A549 (cell line): ENCODE measurements at regions of chr15 and their contacts with region 1.

Region 1: GRCh38 chr15:33242669-33243191 is 48.2 kb upstream of the FMN1 start:
- DNase-seq: peak in 1 of 2 experiments; percentile 48
- ATAC-seq: peak in 1 of 2 experiments; percentile 42; a peak in 2 of 6 replicates
- H3K4me3 ChIP-seq: no peak overlapping the region
- H3K27ac ChIP-seq: peak overlapping the region; percentile 39 to 65; a peak in 5 of 6 replicates
- H3K4me1 ChIP-seq: peaks cover 39% of the 10 kb centered on the region
- CTCF ChIP-seq: peak; percentile 41
- EP300 ChIP-seq: no peak
- POLR2A ChIP-seq: no peak
- RAD21 ChIP-seq: peak; percentile 48 to 50; a peak in 3 of 5 replicates

Region 2: DNA sequence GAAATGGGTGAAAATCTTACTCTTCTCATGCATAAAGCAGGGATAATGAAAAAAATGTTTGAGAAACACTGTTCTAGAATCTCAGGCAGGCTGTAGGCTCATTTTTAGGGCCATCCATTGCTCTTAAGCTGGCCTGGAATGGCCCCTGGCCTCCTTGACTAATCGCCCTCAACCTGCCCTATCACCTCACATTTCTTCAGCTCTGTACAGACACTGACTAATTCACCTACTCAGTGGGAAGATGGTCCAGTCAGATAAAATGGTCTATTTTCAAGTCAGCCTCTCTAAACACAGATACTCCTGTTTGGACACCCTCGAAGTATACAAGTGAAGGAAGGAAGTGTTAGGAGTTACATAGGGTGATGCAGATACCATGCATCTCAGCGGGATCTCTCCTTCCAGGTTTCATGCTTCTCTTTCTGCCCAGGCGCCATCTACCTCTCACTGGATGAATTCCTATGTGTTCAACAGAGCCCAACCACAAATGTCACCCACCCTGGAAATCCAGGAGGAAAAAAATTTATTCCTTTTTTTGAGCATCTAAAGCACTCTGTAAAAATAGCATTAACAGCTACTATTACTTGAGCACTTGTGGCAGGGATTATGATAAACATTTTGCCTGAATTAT is 60.3 kb before region 1 on chr15:
- CTCF ChIA-PET with region 1: no interaction called
- POLR2A ChIA-PET with region 1: no interaction called
- DNase-seq: no peak
- ATAC-seq: peak; percentile 53 to 54; a peak in 2 of 6 replicates
- H3K4me3 ChIP-seq: no peak overlapping the region
- H3K27ac ChIP-seq: no peak overlapping the region
- H3K4me1 ChIP-seq: no peaks in the 10 kb centered on the region
- CTCF ChIP-seq: no peak
- EP300 ChIP-seq: no peak
- POLR2A ChIP-seq: no peak
- RAD21 ChIP-seq: no peak

Region 3: GRCh38 chr15:33226559-33227181 is 16.1 kb before region 1 on chr15:
- CTCF ChIA-PET with region 1: interaction called, 11 read pairs
- POLR2A ChIA-PET with region 1: no interaction called
- DNase-seq: peak; percentile 85 to 86
- ATAC-seq: peak; percentile 88 to 97
- H3K4me3 ChIP-seq: no peak overlapping the region
- H3K27ac ChIP-seq: no peak overlapping the region
- H3K4me1 ChIP-seq: no peaks in the 10 kb centered on the region
- CTCF ChIP-seq: peak; percentile 57
- EP300 ChIP-seq: no peak
- POLR2A ChIP-seq: no peak
- RAD21 ChIP-seq: peak; percentile 37 to 39; a peak in 4 of 5 replicates

Region 4: GRCh38 chr15:33256874-33257273 is 14.1 kb after region 1 on chr15:
- CTCF ChIA-PET with region 1: interaction called, 15 read pairs
- POLR2A ChIA-PET with region 1: no interaction called
- DNase-seq: no peak
- ATAC-seq: no peak
- H3K4me3 ChIP-seq: no peak overlapping the region
- H3K27ac ChIP-seq: no peak overlapping the region
- H3K4me1 ChIP-seq: no peaks in the 10 kb centered on the region
- CTCF ChIP-seq: no peak
- EP300 ChIP-seq: no peak
- POLR2A ChIP-seq: no peak
- RAD21 ChIP-seq: no peak

Region 5: DNA sequence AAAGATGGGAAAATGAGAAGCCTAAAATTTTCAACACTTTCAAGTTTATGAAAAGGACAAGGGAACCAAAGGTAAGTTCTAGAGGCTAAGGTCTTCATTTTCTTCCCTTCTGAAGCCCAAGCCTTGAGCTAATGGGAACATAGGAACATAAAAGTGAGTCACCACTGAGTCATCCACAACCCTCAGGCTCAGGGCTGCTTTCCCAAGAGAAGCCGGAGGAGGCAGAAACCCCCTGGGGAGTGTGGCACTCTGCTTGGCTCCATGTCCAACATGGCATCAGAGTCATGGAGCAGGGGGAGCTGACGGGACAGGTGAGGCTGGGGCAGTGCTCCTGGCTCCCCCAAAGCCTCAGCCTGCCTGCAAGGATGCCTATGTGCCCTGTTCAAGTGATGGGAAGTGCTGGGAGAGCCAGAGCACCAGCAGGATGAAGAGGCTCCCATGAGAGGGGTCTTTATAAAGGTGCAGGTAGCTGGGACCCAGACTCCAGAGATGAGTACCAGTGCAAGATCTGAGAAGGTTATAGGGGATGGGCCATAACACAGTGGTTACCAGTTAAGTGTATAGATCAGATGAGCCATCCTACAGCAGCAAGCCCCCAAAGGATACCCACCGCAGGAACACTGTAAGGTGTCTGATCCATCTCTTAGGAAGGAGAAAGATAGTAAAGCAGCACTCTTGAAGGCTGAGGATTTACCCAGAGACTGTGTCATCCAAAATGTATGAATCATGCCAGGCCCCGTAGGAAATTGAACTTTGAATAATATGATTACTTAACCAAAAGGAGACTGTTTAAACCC is 36.3 kb after region 1 on chr15:
- CTCF ChIA-PET with region 1: interaction called, 12 read pairs
- POLR2A ChIA-PET with region 1: no interaction called
- DNase-seq: peak; percentile 80 to 88
- ATAC-seq: peak; percentile 96 to 98
- H3K4me3 ChIP-seq: no peak overlapping the region
- H3K27ac ChIP-seq: peak overlapping the region; percentile 74 to 88
- H3K4me1 ChIP-seq: peaks cover 21% of the 10 kb centered on the region
- CTCF ChIP-seq: no peak
- EP300 ChIP-seq: peak in 1 of 2 experiments; percentile 25; a peak in 1 of 5 replicates
- POLR2A ChIP-seq: no peak
- RAD21 ChIP-seq: no peak; a peak in 1 of 5 replicates